Heart left ventricle (tissue), 16 donors: ENCODE measurements at regions of chr21 and their contacts with region 1.

Region 1: DNA sequence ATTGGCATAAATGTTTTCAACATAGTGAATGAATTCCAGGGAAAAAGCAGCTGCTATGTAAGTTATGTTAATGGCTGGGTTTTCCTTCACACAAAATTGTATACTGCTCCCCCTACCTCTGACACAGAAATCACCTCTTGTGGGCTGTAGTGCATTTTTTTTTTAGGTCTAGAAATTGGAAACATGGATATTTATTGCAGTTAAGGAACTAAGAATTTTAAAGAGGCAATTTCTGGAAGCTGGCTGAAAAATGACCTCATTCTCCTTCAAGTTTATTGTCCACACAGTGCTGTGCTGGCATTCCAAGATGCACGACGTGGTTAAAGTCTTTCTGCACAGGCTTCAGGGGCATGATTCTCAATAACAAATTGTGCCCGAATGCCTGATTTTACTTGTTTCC is 1424.2 kb downstream of the MRPL39 start:
- DNase-seq: no peak
- ATAC-seq: no peak
- H3K4me3 ChIP-seq: no peak overlapping the region
- H3K27ac ChIP-seq: no peak overlapping the region
- H3K4me1 ChIP-seq: no peaks in the 10 kb centered on the region
- H3K27me3 ChIP-seq: no peaks in the 10 kb centered on the region
- CTCF ChIP-seq: no peak
- POLR2A ChIP-seq: no peak

Region 2: DNA sequence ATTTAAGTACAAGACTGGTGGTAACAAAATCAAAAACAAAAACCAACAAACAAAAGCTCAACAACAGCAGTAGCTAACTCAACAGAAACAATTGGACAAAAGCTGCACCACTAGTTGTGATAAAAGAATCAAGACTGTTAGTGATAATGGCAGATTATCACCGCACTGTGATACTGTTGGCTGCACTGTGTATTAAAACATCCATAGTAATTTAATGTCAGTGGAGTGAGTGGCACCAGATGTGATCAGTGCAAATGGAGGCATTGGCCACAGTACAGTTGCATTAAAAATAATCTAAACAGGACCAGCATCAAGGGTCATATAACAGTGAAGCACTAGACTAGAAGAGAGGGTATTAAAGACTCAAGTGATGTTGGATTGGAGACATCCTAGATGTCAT is 82.9 kb after region 1 on chr21:
- intact Hi-C with region 1: loop called in 1 of 10 experiments (anchors 10 kb)
- DNase-seq: no peak
- ATAC-seq: no peak
- H3K4me3 ChIP-seq: no peak overlapping the region
- H3K27ac ChIP-seq: no peak overlapping the region
- H3K4me1 ChIP-seq: no peaks in the 10 kb centered on the region
- H3K27me3 ChIP-seq: no peaks in the 10 kb centered on the region
- CTCF ChIP-seq: no peak
- POLR2A ChIP-seq: no peak